Panc1 (cell line): ENCODE measurements at regions of chr15 and their contacts with region 1.

Region 1: DNA sequence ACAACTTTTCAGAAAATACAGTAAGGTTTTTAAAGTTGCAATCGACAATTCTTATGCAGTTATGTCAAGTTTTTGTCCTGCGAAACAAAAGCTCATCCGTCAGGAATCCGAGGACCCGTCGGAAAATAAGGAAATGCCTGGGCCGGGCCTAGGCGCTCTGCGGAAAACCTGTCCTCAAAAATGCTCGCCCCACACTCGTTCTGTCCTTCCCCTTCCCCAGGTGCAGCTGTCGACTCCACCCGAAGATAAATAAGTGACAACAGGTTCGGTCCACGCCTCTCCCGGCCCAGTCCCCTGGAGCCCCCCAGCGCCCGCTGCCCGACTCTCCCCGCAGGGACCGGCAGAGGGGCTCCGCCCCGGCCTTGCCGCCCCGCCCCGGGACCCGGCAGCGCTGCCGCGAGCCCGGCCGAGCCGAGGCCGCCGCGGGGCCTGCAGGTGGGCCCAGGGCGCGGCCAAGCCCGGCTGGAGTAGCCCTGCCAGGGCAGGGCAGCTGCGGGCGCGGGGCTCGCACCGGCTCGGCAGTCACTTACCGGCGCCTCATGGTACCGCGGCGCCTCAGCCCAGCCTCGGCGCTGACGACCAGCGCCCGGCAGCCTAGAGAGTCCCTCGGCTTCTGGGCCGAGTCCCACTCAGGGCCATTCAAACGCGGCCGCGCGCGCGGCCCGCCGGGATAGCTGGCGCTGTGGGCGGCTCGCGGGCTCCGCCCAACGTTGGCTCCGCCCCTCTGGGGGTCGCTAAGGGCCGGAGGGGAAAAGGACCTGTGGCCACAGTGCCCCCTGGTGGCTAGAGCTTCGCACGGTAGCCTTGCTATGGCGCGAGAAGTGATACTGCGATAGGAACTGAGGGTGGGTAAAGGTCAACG is at the start of gene KATNBL1:
- DNase-seq: peak; percentile 82
- ATAC-seq: peak; percentile 99
- H3K4me3 ChIP-seq: peak within 1 kb of the TSS; percentile 78 to 88
- H3K27ac ChIP-seq: peak within 1 kb of the TSS; percentile 91
- H3K4me1 ChIP-seq: no peaks in the 10 kb centered on the region
- H3K27me3 ChIP-seq: no peaks in the 10 kb centered on the region
- CTCF ChIP-seq: peak; percentile 93
- total RNA-seq, gene KATNBL1: 46.1 TPM

Region 2: GRCh38 chr15:33941279-33942063 is 268.2 kb before region 1 on chr15:
- CTCF ChIA-PET with region 1: no interaction called
- POLR2A ChIA-PET with region 1: no interaction called
- in situ Hi-C with region 1: no loop called
- intact Hi-C with region 1: no loop called
- DNase-seq: no peak
- ATAC-seq: no peak
- H3K4me3 ChIP-seq: no peak overlapping the region
- H3K27ac ChIP-seq: no peak overlapping the region
- H3K4me1 ChIP-seq: no peaks in the 10 kb centered on the region; the same call in 1 of the 2 replicates
- H3K27me3 ChIP-seq: no peaks in the 10 kb centered on the region
- CTCF ChIP-seq: no peak

Region 3: GRCh38 chr15:34065941-34066340 is 143.7 kb before region 1 on chr15:
- CTCF ChIA-PET with region 1: interaction called, 3 read pairs
- POLR2A ChIA-PET with region 1: interaction called, 3 read pairs
- in situ Hi-C with region 1: no loop called
- intact Hi-C with region 1: loop called (anchors 5 kb)
- DNase-seq: no peak
- ATAC-seq: no peak
- H3K4me3 ChIP-seq: no peak overlapping the region
- H3K27ac ChIP-seq: no peak overlapping the region
- H3K4me1 ChIP-seq: no peaks in the 10 kb centered on the region
- H3K27me3 ChIP-seq: no peaks in the 10 kb centered on the region
- CTCF ChIP-seq: no peak

Region 4: GRCh38 chr15:34109797-34110663 is 99.6 kb before region 1 on chr15:
- CTCF ChIA-PET with region 1: interaction called, 26 read pairs
- POLR2A ChIA-PET with region 1: interaction called, 4 read pairs
- in situ Hi-C with region 1: no loop called
- intact Hi-C with region 1: loop called (anchors 2 kb)
- DNase-seq: no peak
- ATAC-seq: peak; percentile 82
- H3K4me3 ChIP-seq: no peak overlapping the region
- H3K27ac ChIP-seq: no peak overlapping the region
- H3K4me1 ChIP-seq: no peaks in the 10 kb centered on the region
- H3K27me3 ChIP-seq: no peaks in the 10 kb centered on the region
- CTCF ChIP-seq: peak; percentile 79; the same call in 1 of the 2 replicates

Region 5: DNA sequence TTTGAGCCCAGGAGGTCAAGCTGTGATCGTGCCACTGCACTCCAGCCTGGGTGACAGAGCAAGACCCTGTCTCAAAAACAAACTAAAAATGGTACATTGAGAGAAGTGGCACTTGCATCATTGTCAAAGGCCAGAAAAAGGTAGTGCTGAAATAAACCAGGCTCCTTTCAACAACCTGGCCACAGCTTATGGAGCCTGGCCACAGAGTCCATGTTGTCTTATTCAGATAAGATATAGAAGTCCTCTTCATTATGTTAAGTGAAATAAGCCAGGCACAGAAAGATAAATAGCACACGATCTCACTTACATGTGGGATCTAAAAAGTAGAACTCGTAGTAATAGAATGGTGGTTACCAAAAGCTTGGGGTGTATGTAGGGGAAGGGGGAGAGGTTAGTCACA is 49.9 kb after region 1 on chr15:
- CTCF ChIA-PET with region 1: no interaction called
- POLR2A ChIA-PET with region 1: no interaction called
- in situ Hi-C with region 1: no loop called
- intact Hi-C with region 1: no loop called
- DNase-seq: no peak
- ATAC-seq: no peak
- H3K4me3 ChIP-seq: no peak overlapping the region
- H3K27ac ChIP-seq: no peak overlapping the region
- H3K4me1 ChIP-seq: no peaks in the 10 kb centered on the region
- H3K27me3 ChIP-seq: no peaks in the 10 kb centered on the region
- CTCF ChIP-seq: no peak